ENCODE measurements at regions of chr2 and their contacts with region 1.

Region 1: DNA sequence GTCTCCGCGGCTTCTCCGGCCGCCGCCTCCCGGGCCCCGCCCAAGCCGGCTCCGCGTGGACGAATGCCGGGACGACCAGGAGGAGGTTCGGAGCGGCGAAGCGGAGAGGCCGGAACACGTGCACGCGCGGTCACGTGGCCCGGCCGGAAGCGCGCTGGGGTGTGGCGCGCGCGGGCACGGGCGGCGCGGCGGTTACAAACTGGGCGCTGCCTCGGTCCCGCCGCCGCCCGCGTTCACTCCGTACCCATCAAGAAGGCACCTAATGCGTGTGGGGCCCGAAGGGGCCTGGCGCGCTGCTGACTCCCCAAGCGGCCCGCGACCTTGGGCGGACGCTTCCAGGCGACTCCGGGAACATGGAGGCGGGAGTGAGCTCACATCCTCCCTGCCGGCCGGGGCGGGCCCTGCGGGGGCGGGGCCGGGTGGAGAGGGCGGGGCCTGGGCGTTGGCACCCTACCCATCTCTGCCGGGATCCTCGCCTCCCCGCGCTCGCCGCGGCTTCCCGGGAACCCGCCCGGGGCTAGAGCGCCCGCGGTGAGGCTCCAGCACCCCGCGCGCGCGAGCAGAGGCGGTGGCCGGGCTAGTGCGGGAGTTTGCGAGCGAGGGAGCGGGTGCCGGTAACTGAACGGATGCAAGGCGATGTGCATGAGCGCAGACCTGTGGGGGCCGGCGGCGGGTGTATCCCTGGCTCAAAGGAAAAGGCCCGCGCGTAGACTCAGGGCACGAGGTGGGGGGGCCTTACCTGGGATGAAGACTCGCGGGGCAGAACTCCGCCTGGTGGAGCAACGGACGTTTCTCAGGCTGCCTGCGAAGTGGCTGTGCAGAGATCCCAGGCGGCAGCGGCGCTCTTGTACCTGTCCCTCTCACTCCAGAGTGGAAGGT is at the start of gene TMEM185B:
- DNase-seq: peak; percentile 95
- ATAC-seq: peak; percentile 90
- H3K4me3 Mint-ChIP-seq: peak within 1 kb of the TSS; percentile 76
- H3K27ac Mint-ChIP-seq: peak within 1 kb of the TSS; percentile 93
- H3K4me1 Mint-ChIP-seq: peaks cover 50% of the 10 kb centered on the region
- H3K27me3 Mint-ChIP-seq: no peaks in the 10 kb centered on the region
- total RNA-seq, gene TMEM185B: 15.9 to 17.3 TPM

Region 2: GRCh38 chr2:119678998-119679710 is 544.1 kb before region 1 on chr2 and contains the start of gene TMEM177:
- CTCF ChIA-PET with region 1: no interaction called
- POLR2A ChIA-PET with region 1: no interaction called
- intact Hi-C with region 1: loop called in 1 of 2 experiments (anchors 2 kb)
- DNase-seq: peak; percentile 94
- ATAC-seq: peak; percentile 93
- H3K4me3 Mint-ChIP-seq: peak within 1 kb of the TSS; percentile 87
- H3K27ac Mint-ChIP-seq: peak within 1 kb of the TSS; percentile 88
- H3K4me1 Mint-ChIP-seq: peaks cover 33% of the 10 kb centered on the region
- H3K27me3 Mint-ChIP-seq: no peaks in the 10 kb centered on the region
- total RNA-seq, gene TMEM177: 13.6 to 15.8 TPM

Region 3: DNA sequence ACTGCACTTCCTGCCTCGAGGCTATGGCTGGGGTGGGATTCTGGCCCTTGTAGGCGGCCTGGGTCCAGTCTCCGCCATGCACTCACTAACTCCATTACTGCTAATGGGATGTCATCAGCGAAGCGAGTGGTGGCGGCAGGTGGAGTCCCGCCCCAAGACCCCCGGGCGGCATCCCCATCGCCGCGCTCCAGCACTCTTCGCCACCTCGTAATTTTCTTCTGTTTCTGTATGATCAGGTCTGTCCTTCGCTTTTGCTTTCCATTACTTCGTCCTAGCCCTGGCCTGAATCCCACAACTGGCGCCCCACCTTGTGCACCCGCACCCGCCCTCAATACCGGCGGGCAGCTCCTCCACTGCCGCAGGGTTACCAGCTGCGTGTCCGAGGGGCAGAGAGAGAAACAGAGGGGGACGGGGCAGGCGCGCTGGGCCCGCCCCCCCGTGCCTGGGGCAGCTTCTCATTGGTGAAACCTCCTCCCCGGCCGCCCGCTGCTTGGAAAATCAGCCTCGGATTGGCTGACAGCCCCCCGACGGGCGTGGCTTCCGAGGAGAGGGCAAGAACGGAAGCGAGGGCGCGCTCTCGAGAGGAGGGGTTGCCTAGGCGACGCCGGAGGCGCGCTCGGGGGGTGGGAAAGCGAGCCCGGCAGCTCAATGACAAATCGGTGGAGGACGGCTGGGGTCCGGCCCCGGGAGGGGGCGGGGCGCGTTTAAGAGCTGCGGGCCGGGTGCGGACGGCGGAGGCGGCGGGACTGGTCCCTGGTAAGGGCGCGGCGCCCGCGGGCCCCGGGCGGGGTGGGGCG is 29.1 kb after region 1 on chr2 and contains the start of gene RALB:
- CTCF ChIA-PET with region 1: interaction called, 3 read pairs
- POLR2A ChIA-PET with region 1: interaction called, 6 read pairs
- intact Hi-C with region 1: loop called (anchors 1 kb)
- DNase-seq: peak; percentile 100
- ATAC-seq: peak; percentile 95
- H3K4me3 Mint-ChIP-seq: peak within 1 kb of the TSS; percentile 92
- H3K27ac Mint-ChIP-seq: peak within 1 kb of the TSS; percentile 86
- H3K4me1 Mint-ChIP-seq: peaks cover 41% of the 10 kb centered on the region
- H3K27me3 Mint-ChIP-seq: peaks cover 6% of the 10 kb centered on the region
- total RNA-seq, gene RALB: 34.0 to 34.3 TPM

Region 4: GRCh38 chr2:120287183-120288015 is 64.1 kb after region 1 on chr2:
- CTCF ChIA-PET with region 1: interaction called, 3 read pairs
- POLR2A ChIA-PET with region 1: no interaction called
- intact Hi-C with region 1: loop called in 1 of 2 experiments (anchors 2 kb)
- DNase-seq: peak; percentile 63
- ATAC-seq: peak; percentile 97
- H3K4me3 Mint-ChIP-seq: no peak overlapping the region
- H3K27ac Mint-ChIP-seq: peak overlapping the region; percentile 79
- H3K4me1 Mint-ChIP-seq: peaks cover 29% of the 10 kb centered on the region
- H3K27me3 Mint-ChIP-seq: no peaks in the 10 kb centered on the region

Region 5: GRCh38 chr2:121205321-121205942 is 982.2 kb after region 1 on chr2:
- CTCF ChIA-PET with region 1: no interaction called
- POLR2A ChIA-PET with region 1: no interaction called
- intact Hi-C with region 1: no loop called
- DNase-seq: no peak
- ATAC-seq: no peak
- H3K4me3 Mint-ChIP-seq: no peak overlapping the region
- H3K27ac Mint-ChIP-seq: no peak overlapping the region
- H3K4me1 Mint-ChIP-seq: no peaks in the 10 kb centered on the region
- H3K27me3 Mint-ChIP-seq: no peaks in the 10 kb centered on the region

Measured in activated CD4-positive, alpha-beta T cell treated with anti-CD3 and anti-CD28 coated beads for 36 hours (primary cell).